ENCODE measurements at regions of chr13 and their contacts with region 1.

Region 1: DNA sequence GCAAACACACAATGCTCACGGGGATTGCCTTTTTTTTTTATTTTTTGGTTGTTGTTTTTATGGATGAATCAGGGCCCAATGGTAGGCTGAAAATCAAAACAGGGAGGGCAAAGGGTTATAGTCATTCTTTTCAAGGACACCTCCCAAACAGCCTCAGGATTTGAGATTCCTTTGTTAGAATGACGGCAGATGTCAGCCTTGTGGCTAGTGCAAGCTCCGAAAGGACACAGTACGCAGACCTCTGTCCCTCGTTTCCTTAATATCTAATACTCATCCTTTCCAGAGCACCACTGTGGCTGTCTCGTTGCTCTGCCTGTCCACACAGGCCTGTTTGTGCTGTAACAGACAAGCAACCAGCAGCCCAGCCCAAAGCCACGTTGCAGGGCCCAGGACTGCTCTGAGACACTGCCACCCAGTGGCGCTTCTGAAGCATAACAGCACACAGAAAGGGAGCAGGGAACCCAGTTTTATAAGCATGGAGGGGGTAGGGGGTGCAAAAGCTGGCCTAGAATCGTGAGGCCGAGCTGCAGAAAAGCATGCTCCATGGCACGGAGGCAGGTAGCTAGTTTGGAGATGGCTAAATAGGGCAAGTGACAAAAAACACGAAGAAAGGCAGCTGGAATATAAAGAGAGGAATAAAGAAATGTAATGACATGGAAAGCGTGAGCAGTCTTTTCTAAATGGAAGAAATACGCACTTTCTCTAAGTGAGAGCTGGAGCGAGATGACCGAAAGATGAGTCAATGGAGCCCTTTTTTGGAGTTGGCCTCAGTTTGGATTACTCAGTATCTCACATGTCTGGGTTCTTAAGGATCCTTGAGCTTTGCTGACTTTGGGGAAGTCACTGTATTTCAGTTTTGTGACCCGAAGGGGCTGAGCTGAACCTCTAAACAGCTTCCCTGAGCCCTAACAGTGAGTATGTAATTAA is 40.7 kb upstream of the MEDAG start:
- DNase-seq: peak; percentile 89
- H3K4me3 ChIP-seq: no peak overlapping the region
- H3K27ac ChIP-seq: peak overlapping the region; percentile 76
- H3K4me1 ChIP-seq: peaks cover 37% of the 10 kb centered on the region
- H3K27me3 ChIP-seq: no peaks in the 10 kb centered on the region
- CTCF ChIP-seq: peak; percentile 96 to 97

Region 2: GRCh38 chr13:30132623-30133553 is 732.5 kb before region 1 on chr13:
- CTCF ChIA-PET with region 1: interaction called, 3 read pairs
- dilution Hi-C with region 1: no loop called
- in situ Hi-C with region 1: no loop called
- intact Hi-C with region 1: loop called (anchors 2 kb)
- DNase-seq: peak; percentile 74
- H3K4me3 ChIP-seq: no peak overlapping the region
- H3K27ac ChIP-seq: no peak overlapping the region
- H3K4me1 ChIP-seq: peaks cover 3% of the 10 kb centered on the region
- H3K27me3 ChIP-seq: no peaks in the 10 kb centered on the region
- CTCF ChIP-seq: peak; percentile 63 to 89

Region 3: DNA sequence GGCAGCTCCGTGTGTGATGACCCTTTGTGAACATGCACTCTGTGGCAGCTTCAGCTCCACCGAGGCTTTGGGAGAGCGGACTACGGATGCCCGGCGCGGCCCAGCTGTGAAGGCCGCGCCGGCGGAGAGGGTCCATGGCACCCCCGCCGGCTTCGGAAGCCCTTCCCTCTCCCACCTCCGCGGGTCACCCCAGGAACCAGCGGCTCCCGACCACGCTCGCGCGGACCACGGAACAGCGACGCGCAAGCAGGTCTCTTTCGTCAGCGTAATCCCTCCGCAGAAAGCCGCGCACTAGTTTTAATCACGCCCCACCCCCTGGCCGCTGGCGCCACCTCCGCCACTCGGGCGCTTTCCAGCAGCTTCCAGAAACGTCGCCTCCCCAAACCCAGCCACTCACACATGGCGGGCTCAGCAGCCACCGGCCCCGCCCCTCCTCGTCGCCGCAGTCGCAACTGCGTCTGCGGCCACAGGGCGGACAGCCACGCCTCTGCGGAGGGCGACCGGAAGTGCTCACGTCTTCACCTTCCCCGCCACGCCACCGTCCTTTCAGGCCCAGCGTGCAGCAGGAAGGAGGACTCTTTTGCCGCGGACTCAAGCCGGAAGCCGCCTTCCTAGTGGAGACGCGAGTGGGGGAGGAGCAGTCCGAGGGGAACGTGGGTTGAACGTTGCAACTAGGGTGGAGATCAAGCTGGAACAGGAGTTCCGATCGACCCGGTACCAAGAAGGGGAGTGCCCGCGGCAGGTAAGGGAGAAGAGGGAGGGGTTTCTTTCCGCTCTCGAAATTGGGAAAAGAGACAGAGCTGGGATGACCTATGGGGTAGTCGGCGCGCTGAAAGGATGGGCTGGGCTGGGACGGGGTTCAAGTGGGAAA is 247.8 kb before region 1 on chr13 and contains the start of gene USPL1:
- CTCF ChIA-PET with region 1: no interaction called
- dilution Hi-C with region 1: no loop called
- in situ Hi-C with region 1: no loop called
- intact Hi-C with region 1: loop called (anchors 1 kb)
- DNase-seq: peak; percentile 99
- H3K4me3 ChIP-seq: peak within 1 kb of the TSS; percentile 71 to 78 (median 75)
- H3K27ac ChIP-seq: peak within 1 kb of the TSS; percentile 96
- H3K4me1 ChIP-seq: peaks cover 3% of the 10 kb centered on the region
- H3K27me3 ChIP-seq: no peaks in the 10 kb centered on the region
- CTCF ChIP-seq: peak in 1 of 2 donors; percentile 20
- total RNA-seq, gene USPL1: 12.4 to 13.5 TPM

Region 4: GRCh38 chr13:30734436-30734835 is 130.9 kb before region 1 on chr13:
- CTCF ChIA-PET with region 1: no interaction called
- dilution Hi-C with region 1: no loop called
- in situ Hi-C with region 1: no loop called
- intact Hi-C with region 1: loop called (anchors 1 kb)
- DNase-seq: peak; percentile 82
- H3K4me3 ChIP-seq: no peak overlapping the region
- H3K27ac ChIP-seq: peak overlapping the region; percentile 37
- H3K4me1 ChIP-seq: peaks cover 23% of the 10 kb centered on the region
- H3K27me3 ChIP-seq: no peaks in the 10 kb centered on the region
- CTCF ChIP-seq: no peak

Region 5: DNA sequence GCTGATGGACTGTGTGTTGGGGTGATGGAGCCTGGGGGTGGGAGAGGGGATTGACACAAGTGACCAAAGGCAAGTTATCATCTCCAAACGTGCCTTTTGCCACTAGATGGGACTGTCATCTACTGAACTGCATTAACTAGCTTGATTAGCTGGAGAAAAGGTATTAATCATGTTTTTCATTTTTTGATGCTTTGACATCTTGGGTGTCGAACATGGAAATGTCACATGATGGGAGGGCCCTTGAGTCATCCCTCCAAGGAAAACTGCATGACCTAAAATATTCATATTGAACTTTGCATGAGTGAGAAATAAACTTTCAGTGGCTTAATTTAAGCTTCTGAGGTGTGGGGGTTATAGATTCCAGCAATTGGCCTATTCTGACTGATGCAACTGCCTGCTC is 56.8 kb before region 1 on chr13:
- CTCF ChIA-PET with region 1: interaction called, 13 read pairs
- dilution Hi-C with region 1: no loop called
- in situ Hi-C with region 1: loop called in 1 of 2 experiments (anchors 10 kb)
- intact Hi-C with region 1: loop called (anchors 1 kb)
- DNase-seq: no peak
- H3K4me3 ChIP-seq: no peak overlapping the region
- H3K27ac ChIP-seq: no peak overlapping the region
- H3K4me1 ChIP-seq: peaks cover 51% of the 10 kb centered on the region
- H3K27me3 ChIP-seq: no peaks in the 10 kb centered on the region
- CTCF ChIP-seq: peak in 1 of 2 donors; percentile 41

Region 6: GRCh38 chr13:30880856-30881155 is 15.4 kb after region 1 on chr13:
- CTCF ChIA-PET with region 1: no interaction called
- dilution Hi-C with region 1: no loop called
- in situ Hi-C with region 1: no loop called
- intact Hi-C with region 1: no loop called
- DNase-seq: peak; percentile 70
- H3K4me3 ChIP-seq: no peak overlapping the region
- H3K27ac ChIP-seq: no peak overlapping the region
- H3K4me1 ChIP-seq: peaks cover 10% of the 10 kb centered on the region
- H3K27me3 ChIP-seq: no peaks in the 10 kb centered on the region
- CTCF ChIP-seq: no peak

Region 7: GRCh38 chr13:31044377-31045285 is 179.2 kb after region 1 on chr13:
- CTCF ChIA-PET with region 1: interaction called, 3 read pairs
- dilution Hi-C with region 1: no loop called
- in situ Hi-C with region 1: no loop called
- intact Hi-C with region 1: loop called (anchors 1 kb)
- DNase-seq: peak; percentile 72
- H3K4me3 ChIP-seq: no peak overlapping the region
- H3K27ac ChIP-seq: peak overlapping the region; percentile 74
- H3K4me1 ChIP-seq: peaks cover 32% of the 10 kb centered on the region
- H3K27me3 ChIP-seq: no peaks in the 10 kb centered on the region
- CTCF ChIP-seq: peak; percentile 97 to 98

Measured in mammary epithelial cell (primary cell).